GM12878 (cell line): ENCODE measurements at regions of chr12 and their contacts with region 1.

Region 1: GRCh38 chr12:92485351-92486348 is 217.1 kb upstream of the PLEKHG7 start:
- DNase-seq: no peak
- ATAC-seq: peak; percentile 58
- H3K4me3 ChIP-seq: no peak overlapping the region
- H3K27ac ChIP-seq: peak overlapping the region; percentile 90
- H3K4me1 ChIP-seq: peaks cover 53% of the 10 kb centered on the region
- H3K27me3 ChIP-seq: no peaks in the 10 kb centered on the region
- CTCF ChIP-seq: no peak
- EP300 ChIP-seq: no peak
- POLR2A ChIP-seq: no peak
- RAD21 ChIP-seq: no peak

Region 2: DNA sequence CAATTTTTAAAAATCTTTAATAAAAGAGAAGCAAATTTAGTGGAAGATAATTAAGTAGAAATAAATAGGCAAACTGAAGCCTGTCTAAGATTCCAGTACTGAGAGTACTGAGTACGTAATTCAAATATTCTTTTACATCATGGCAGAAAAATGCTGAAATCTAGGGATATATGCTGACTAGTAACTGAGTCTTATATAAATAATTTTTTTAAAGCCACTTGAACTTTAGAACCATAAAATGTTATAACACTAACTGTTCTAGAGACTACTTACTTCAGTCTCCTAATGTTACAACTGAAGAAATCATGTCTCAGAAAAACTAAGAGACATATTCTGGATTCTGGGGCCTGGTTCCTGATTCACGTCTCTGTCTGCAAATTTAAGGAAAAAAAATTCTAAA is 13.4 kb before region 1 on chr12:
- CTCF ChIA-PET with region 1: interaction called, 38 read pairs
- POLR2A ChIA-PET with region 1: interaction called, 49 read pairs
- RAD21 ChIA-PET with region 1: interaction called, 39 read pairs
- SMC1A ChIA-PET with region 1: interaction called, 167 read pairs
- in situ Hi-C with region 1: no loop called
- intact Hi-C with region 1: loop called (anchors 1 kb)
- DNase-seq: no peak
- ATAC-seq: no peak
- H3K4me3 ChIP-seq: no peak overlapping the region
- H3K27ac ChIP-seq: peak overlapping the region; percentile 81
- H3K4me1 ChIP-seq: peaks cover 40% of the 10 kb centered on the region
- H3K27me3 ChIP-seq: no peaks in the 10 kb centered on the region
- CTCF ChIP-seq: no peak
- EP300 ChIP-seq: no peak
- POLR2A ChIP-seq: no peak
- RAD21 ChIP-seq: no peak

Region 3: GRCh38 chr12:92546635-92547348 is 61.1 kb after region 1 on chr12:
- CTCF ChIA-PET with region 1: no interaction called
- POLR2A ChIA-PET with region 1: interaction called, 5 read pairs
- RAD21 ChIA-PET with region 1: interaction called, 13 read pairs
- SMC1A ChIA-PET with region 1: interaction called, 9 read pairs
- in situ Hi-C with region 1: no loop called
- intact Hi-C with region 1: no loop called
- DNase-seq: no peak
- ATAC-seq: peak; percentile 60
- H3K4me3 ChIP-seq: no peak overlapping the region
- H3K27ac ChIP-seq: no peak overlapping the region
- H3K4me1 ChIP-seq: peaks cover 43% of the 10 kb centered on the region
- H3K27me3 ChIP-seq: no peaks in the 10 kb centered on the region
- CTCF ChIP-seq: no peak
- EP300 ChIP-seq: peak in 1 of 2 experiments; percentile 52; a peak in 2 of 4 replicates
- POLR2A ChIP-seq: no peak
- RAD21 ChIP-seq: no peak

Region 4: DNA sequence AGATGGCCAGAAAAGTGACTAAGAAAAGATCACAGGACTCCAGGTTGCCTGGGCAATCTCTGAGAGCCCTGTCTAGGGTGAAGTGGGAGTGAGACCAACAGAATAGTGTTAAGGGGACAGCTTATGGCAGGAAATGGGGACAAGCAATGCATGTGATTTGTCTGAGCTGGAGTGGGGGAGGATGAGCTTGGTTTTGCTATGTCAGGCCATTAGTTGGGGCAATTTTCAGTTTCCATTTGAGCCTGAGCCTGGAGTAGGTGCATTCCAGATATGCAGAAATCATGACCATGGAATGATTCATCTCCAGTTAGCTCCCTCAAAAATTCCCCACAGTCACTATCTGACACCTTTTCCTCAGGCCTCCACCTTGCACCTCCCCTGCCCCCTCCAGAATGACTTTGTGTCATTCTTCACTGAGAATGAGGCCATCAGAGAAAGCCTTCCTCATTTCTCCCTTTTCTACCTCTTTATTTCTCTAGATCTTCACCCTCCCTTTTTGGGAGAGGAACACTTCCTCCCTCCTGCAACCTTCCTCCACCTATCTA is 66.3 kb after region 1 on chr12:
- CTCF ChIA-PET with region 1: interaction called, 4 read pairs
- POLR2A ChIA-PET with region 1: interaction called, 5 read pairs
- RAD21 ChIA-PET with region 1: interaction called, 13 read pairs
- SMC1A ChIA-PET with region 1: interaction called, 805 read pairs
- in situ Hi-C with region 1: no loop called
- intact Hi-C with region 1: no loop called
- DNase-seq: peak; percentile 98
- ATAC-seq: peak; percentile 75
- H3K4me3 ChIP-seq: peak overlapping the region; percentile 17; the same call in 1 of the 2 replicates
- H3K27ac ChIP-seq: peak overlapping the region; percentile 98
- H3K4me1 ChIP-seq: peaks cover 67% of the 10 kb centered on the region
- H3K27me3 ChIP-seq: no peaks in the 10 kb centered on the region
- CTCF ChIP-seq: no peak
- EP300 ChIP-seq: peak; percentile 92 to 97
- POLR2A ChIP-seq: peak; percentile 57
- RAD21 ChIP-seq: no peak

Region 5: GRCh38 chr12:92690601-92691000 is 205.0 kb after region 1 on chr12:
- CTCF ChIA-PET with region 1: no interaction called
- POLR2A ChIA-PET with region 1: no interaction called
- RAD21 ChIA-PET with region 1: no interaction called
- SMC1A ChIA-PET with region 1: no interaction called
- in situ Hi-C with region 1: no loop called
- intact Hi-C with region 1: no loop called
- DNase-seq: no peak
- ATAC-seq: no peak
- H3K4me3 ChIP-seq: no peak overlapping the region
- H3K27ac ChIP-seq: no peak overlapping the region
- H3K4me1 ChIP-seq: no peaks in the 10 kb centered on the region
- H3K27me3 ChIP-seq: peaks cover 0 to 3% of the 10 kb centered on the region in 2 experiments; a peak in 1 of 4 replicates
- CTCF ChIP-seq: no peak
- EP300 ChIP-seq: no peak
- POLR2A ChIP-seq: no peak
- RAD21 ChIP-seq: no peak

Region 6: GRCh38 chr12:92912052-92912451 is 426.4 kb after region 1 on chr12:
- CTCF ChIA-PET with region 1: no interaction called
- POLR2A ChIA-PET with region 1: no interaction called
- RAD21 ChIA-PET with region 1: no interaction called
- SMC1A ChIA-PET with region 1: no interaction called
- in situ Hi-C with region 1: no loop called
- intact Hi-C with region 1: no loop called
- DNase-seq: no peak
- ATAC-seq: peak; percentile 57
- H3K4me3 ChIP-seq: no peak overlapping the region
- H3K27ac ChIP-seq: no peak overlapping the region
- H3K4me1 ChIP-seq: no peaks in the 10 kb centered on the region
- H3K27me3 ChIP-seq: no peaks in the 10 kb centered on the region
- CTCF ChIP-seq: no peak
- EP300 ChIP-seq: no peak
- POLR2A ChIP-seq: no peak
- RAD21 ChIP-seq: no peak